ENCODE measurements at regions of chr17 and their contacts with region 1.

Region 1: DNA sequence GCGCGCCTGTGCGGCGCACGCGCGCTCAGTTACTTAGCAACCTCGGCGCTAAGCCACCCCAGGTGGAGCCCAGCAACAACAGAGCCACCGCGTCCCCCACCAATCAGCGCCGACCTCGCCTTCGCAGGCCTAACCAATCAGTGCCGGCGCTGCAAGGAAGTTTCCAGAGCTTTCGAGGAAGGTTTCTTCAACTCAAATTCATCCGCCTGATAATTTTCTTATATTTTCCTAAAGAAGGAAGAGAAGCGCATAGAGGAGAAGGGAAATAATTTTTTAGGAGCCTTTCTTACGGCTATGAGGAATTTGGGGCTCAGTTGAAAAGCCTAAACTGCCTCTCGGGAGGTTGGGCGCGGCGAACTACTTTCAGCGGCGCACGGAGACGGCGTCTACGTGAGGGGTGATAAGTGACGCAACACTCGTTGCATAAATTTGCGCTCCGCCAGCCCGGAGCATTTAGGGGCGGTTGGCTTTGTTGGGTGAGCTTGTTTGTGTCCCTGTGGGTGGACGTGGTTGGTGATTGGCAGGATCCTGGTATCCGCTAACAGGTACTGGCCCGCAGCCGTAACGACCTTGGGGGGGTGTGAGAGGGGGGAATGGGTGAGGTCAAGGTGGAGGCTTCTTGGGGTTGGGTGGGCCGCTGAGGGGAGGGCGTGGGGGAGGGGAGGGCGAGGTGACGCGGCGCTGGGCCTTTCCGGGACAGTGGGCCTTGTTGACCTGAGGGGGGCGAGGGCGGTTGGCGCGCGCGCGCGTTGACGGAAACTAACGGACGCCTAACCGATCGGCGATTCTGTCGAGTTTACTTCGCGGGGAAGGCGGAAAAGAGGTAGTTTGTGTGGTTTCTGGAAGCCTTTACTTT is at the start of gene UBB:
- DNase-seq: peak; percentile 96
- H3K4me3 Mint-ChIP-seq: peak within 1 kb of the TSS; percentile 90
- H3K27ac Mint-ChIP-seq: peak within 1 kb of the TSS; percentile 96
- H3K4me1 Mint-ChIP-seq: peaks cover 35% of the 10 kb centered on the region
- H3K27me3 Mint-ChIP-seq: no peaks in the 10 kb centered on the region
- total RNA-seq, gene UBB: 1,579 to 1,628 TPM

Region 2: DNA sequence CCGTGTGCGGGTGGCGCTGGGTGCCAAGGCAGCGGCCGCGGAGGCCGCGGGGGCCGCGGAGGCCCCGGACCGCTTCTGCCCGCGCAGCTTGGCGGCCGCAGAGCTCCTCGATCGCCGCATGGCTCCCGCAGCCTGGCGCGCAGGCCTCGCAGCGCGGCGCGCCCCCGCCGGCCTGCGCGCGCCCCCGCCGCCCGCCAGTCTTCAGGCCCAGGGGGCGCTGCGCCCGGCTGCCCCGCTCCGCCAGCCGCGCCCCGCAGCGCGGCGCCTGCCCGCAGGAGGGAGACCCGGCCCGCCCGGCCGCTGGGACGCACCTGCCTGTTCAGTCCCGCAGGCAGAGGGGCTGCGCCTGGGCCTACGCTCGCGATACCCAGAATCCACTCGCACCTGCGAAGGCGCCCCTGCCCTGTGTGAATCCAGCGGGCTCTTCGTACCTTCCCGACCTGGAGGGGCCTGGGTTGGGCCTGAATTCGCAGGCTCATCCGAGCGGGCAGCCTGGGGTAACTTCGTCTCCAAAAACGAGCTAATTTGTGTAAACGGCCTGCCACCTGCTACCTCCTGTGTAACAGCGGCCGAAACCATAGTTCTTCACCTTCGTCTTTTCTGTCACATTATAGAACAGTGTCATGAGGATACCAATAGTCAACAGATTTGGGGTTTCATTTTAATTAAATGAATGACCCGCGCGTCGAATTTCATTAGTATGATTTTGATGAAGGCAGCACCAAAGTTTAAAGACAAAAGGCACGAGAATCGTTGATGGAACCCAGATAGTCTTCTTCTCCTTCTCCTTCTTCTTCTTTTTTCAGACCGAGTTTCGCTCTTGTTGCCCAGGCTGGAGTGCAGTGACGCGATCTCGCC is 27.3 kb before region 1 on chr17 and contains the start of gene CENPV:
- CTCF ChIA-PET with region 1: interaction called, 3 read pairs
- intact Hi-C with region 1: loop called (anchors 2 kb)
- DNase-seq: peak; percentile 62
- H3K4me3 Mint-ChIP-seq: peak within 1 kb of the TSS; percentile 96
- H3K27ac Mint-ChIP-seq: peak within 1 kb of the TSS; percentile 77
- H3K4me1 Mint-ChIP-seq: peaks cover 22% of the 10 kb centered on the region
- H3K27me3 Mint-ChIP-seq: no peaks in the 10 kb centered on the region
- total RNA-seq, gene CENPV: 117 to 121 TPM

Region 3: DNA sequence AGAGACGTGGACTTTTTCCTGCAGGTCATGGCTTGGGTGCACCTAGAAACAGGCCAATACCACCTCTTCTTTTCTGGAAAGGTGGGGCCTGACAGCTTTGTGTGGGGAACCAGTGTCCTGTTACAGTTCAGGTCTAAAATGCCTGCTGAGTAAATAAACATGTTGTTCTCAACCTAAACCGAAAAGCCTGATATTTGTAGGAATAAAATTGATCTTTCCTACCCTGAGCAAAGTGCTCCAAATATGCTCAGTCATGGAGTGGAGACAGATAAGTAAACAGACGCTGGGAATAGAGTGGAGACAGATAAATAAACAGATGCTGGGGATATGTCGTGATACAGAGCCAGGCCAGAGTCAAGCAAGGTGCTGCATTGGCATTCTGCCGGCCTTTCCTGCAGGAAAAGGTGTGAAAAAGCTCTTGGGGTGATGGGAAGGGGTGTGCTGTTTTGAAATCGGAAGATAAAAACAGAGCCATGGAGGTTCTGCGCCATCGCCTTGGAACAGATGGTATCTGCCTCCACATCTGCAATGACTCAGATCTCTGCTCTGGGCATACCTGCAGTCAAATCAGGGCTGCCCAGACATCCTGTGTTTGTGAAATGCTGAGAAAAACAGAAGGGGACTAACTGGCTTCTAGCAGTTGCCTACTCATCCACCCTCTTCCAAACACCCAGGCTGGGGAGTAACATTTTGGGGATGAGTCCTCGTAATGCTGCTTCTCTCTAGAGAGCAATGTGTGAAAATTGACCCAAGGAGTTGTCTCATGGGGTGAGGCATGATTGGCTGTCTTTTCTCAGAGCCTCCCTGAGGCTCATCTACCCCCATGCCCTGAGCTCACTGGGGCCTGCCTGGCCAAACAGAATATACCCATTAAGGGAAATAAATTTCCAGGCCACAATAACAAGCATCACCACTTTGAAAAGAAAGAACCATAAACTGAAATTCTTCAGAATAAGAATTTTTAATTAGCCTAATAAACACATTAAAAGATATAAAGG is 17.7 kb after region 1 on chr17:
- CTCF ChIA-PET with region 1: no interaction called
- intact Hi-C with region 1: loop called (anchors 2 kb)
- DNase-seq: peak; percentile 48
- H3K4me3 Mint-ChIP-seq: no peak overlapping the region
- H3K27ac Mint-ChIP-seq: no peak overlapping the region
- H3K4me1 Mint-ChIP-seq: peaks cover 7% of the 10 kb centered on the region
- H3K27me3 Mint-ChIP-seq: no peaks in the 10 kb centered on the region

Region 4: DNA sequence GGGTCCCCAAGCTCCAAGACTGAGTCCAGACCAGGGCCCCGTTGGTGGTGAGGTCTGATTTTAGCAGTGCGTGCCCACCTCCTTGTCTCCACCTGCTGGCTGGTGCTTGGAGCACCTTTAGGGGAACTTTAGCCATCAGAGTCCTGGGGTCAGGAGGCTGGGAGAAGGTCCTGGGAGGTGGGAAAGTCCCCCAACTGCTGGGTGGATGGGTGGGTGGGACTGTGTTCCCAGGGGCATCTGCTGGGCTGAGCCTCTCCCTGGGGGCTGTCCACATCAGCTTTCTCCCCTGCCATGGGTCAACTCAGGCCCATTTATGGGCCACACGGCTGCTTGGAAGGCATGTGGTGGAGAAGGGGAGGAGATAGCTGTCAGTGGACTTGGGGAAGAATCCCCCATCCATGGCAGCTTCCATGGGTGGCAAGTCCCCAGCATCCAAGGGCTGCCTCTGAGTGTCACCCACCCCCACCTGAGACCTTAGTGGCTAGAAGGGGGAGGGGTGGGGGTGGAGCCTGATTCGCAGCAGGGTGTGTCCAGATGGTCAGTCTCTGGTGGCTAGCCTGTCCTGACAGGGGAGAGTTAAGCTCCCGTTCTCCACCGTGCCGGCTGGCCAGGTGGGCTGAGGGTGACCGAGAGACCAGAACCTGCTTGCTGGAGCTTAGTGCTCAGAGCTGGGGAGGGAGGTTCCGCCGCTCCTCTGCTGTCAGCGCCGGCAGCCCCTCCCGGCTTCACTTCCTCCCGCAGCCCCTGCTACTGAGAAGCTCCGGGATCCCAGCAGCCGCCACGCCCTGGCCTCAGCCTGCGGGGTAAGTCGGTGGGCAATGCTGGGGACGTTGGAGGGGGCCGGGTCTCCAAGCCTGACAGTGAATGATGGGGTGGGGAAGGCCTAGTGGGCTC is 34.4 kb after region 1 on chr17 and contains the start of gene TRPV2:
- CTCF ChIA-PET with region 1: interaction called, 16 read pairs
- intact Hi-C with region 1: loop called (anchors 1 kb)
- DNase-seq: peak; percentile 67
- H3K4me3 Mint-ChIP-seq: peak within 1 kb of the TSS; percentile 98
- H3K27ac Mint-ChIP-seq: peak within 1 kb of the TSS; percentile 100
- H3K4me1 Mint-ChIP-seq: peaks cover 43% of the 10 kb centered on the region
- H3K27me3 Mint-ChIP-seq: no peaks in the 10 kb centered on the region
- total RNA-seq, gene TRPV2: 23.7 to 24.8 TPM

Region 5: DNA sequence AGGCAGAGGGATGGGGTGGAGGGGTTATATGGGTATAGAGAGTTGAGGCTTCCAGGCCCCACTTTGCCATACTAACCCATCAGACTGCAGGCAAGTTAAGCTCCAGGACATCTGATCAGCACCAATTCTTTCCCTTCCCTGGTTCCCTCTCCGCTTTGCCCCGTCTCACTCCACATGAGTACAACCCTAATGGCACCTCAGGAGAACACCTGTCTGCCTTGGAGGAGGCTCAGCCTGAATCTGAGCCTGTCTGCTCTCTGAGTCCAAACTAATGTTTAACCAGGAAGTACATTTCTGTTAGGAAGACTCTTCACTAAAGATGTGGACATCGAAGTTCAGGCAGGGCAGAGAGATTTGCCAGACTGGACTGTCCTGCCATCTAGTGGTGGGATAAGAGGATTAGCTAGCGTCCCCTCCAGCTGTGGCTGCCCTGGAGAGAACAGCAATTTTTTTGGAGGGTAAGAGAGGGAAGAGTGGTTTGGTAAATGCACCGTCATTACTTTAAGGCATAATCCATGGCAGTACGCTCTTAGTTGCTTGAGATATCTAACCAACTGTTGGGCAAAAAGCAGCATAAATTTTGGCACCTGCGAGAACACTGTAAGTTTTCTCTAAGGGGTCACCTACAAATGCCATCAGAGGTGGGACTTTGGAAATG is 140.3 kb after region 1 on chr17:
- CTCF ChIA-PET with region 1: interaction called, 4 read pairs
- intact Hi-C with region 1: loop called (anchors 1 kb)
- DNase-seq: peak; percentile 82
- H3K4me3 Mint-ChIP-seq: no peak overlapping the region
- H3K27ac Mint-ChIP-seq: no peak overlapping the region
- H3K4me1 Mint-ChIP-seq: no peaks in the 10 kb centered on the region
- H3K27me3 Mint-ChIP-seq: peaks cover 26% of the 10 kb centered on the region

Measured in activated naive CD4-positive, alpha-beta T cell treated with anti-CD3 and anti-CD28 coated beads for 36 hours (primary cell).